HEK293 (cell line): ENCODE measurements at regions of chr1 and their contacts with region 1.

Region 1: GRCh38 chr1:115052454-115053083 is 22.9 kb downstream of the TSHB start:
- H3K4me3 ChIP-seq: no peak overlapping the region
- H3K27ac ChIP-seq: no peak overlapping the region
- H3K4me1 ChIP-seq: no peaks in the 10 kb centered on the region
- CTCF ChIP-seq: peak; percentile 68

Region 2: GRCh38 chr1:114979278-114979891 is 73.2 kb before region 1 on chr1:
- CTCF ChIA-PET with region 1: interaction called, 25 read pairs
- POLR2A ChIA-PET with region 1: no interaction called
- H3K4me3 ChIP-seq: no peak overlapping the region
- H3K27ac ChIP-seq: no peak overlapping the region
- H3K4me1 ChIP-seq: no peaks in the 10 kb centered on the region
- CTCF ChIP-seq: peak; percentile 50; the same call in 1 of the 2 replicates

Region 3: DNA sequence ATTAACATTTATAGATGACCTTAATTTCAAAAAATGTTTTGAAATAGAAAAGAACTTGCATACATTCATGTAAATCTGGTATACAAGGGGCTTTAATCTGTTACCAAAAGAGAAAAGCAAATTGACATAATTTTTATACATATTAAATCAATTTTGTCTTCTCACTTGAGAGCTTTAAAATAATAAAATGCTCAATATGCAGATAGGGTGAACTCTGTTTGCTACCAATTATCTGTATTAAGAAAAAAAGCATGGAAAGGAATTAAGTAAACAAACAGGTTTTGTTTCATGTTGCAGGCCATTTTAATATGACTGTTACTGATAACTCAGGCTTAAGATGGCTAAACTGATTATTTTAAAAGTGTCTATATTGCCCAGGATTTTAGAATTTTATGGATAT is 29.0 kb before region 1 on chr1:
- CTCF ChIA-PET with region 1: interaction called, 13 read pairs
- POLR2A ChIA-PET with region 1: no interaction called
- H3K4me3 ChIP-seq: no peak overlapping the region
- H3K27ac ChIP-seq: no peak overlapping the region
- H3K4me1 ChIP-seq: no peaks in the 10 kb centered on the region
- CTCF ChIP-seq: no peak

Region 4: GRCh38 chr1:115031595-115031994 is 21.0 kb before region 1 on chr1:
- CTCF ChIA-PET with region 1: interaction called, 10 read pairs
- POLR2A ChIA-PET with region 1: no interaction called
- H3K4me3 ChIP-seq: no peak overlapping the region
- H3K27ac ChIP-seq: no peak overlapping the region
- H3K4me1 ChIP-seq: no peaks in the 10 kb centered on the region
- CTCF ChIP-seq: no peak

Region 5: GRCh38 chr1:115041654-115042053 is 10.9 kb before region 1 on chr1:
- CTCF ChIA-PET with region 1: interaction called, 61 read pairs
- POLR2A ChIA-PET with region 1: no interaction called
- H3K4me3 ChIP-seq: no peak overlapping the region
- H3K27ac ChIP-seq: no peak overlapping the region
- H3K4me1 ChIP-seq: no peaks in the 10 kb centered on the region
- CTCF ChIP-seq: no peak

Region 6: GRCh38 chr1:115065021-115065420 is 12.5 kb after region 1 on chr1:
- CTCF ChIA-PET with region 1: interaction called, 10 read pairs
- POLR2A ChIA-PET with region 1: no interaction called
- H3K4me3 ChIP-seq: no peak overlapping the region
- H3K27ac ChIP-seq: no peak overlapping the region
- H3K4me1 ChIP-seq: no peaks in the 10 kb centered on the region
- CTCF ChIP-seq: no peak

Region 7: DNA sequence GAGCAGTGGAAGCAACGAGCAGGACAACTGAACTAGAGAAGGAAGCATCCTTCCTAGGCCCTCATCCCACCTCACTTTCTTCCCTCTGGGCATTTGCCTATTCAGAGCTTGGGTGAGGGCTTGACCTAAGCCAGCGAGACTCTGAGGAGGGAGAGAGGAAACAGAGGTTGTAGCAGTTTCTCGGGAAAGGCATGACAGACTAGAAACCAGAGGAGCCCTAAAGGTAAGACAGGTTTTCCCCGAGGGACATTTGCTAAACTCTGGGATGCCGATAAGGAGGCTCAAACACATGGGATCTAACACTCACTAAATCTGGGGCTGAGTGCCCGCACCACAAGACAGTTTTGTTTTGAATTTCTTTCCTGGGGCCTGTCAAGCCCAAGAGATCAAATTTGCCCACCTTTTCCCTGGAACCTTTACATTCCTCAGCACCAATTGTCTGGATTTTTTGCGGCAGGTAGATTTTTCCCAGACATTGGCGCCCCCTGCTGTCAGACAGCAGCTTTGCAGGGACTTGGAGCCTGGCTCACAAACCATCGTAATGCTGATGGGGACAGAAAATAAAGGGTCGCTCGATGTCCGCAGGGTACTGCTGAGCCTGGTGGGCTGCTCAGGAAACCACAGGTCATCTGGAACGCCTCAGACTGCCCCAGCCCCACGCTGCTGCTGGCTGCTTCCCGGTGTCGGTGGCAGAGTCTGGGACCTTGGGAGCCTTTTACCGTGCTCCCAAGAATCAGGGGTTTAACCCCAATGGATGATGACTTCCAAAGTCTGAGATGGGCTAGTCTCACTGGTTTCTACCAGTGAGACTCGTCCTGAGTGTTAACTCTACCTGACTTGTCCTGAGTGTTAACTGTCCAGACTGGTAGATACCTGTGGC is 60.2 kb after region 1 on chr1:
- CTCF ChIA-PET with region 1: interaction called, 24 read pairs
- POLR2A ChIA-PET with region 1: no interaction called
- H3K4me3 ChIP-seq: no peak overlapping the region
- H3K27ac ChIP-seq: no peak overlapping the region
- H3K4me1 ChIP-seq: no peaks in the 10 kb centered on the region; the same call in 1 of the 2 replicates
- CTCF ChIP-seq: peak; percentile 61